ENCODE measurements at regions of chr5 and their contacts with region 1.

Region 1: DNA sequence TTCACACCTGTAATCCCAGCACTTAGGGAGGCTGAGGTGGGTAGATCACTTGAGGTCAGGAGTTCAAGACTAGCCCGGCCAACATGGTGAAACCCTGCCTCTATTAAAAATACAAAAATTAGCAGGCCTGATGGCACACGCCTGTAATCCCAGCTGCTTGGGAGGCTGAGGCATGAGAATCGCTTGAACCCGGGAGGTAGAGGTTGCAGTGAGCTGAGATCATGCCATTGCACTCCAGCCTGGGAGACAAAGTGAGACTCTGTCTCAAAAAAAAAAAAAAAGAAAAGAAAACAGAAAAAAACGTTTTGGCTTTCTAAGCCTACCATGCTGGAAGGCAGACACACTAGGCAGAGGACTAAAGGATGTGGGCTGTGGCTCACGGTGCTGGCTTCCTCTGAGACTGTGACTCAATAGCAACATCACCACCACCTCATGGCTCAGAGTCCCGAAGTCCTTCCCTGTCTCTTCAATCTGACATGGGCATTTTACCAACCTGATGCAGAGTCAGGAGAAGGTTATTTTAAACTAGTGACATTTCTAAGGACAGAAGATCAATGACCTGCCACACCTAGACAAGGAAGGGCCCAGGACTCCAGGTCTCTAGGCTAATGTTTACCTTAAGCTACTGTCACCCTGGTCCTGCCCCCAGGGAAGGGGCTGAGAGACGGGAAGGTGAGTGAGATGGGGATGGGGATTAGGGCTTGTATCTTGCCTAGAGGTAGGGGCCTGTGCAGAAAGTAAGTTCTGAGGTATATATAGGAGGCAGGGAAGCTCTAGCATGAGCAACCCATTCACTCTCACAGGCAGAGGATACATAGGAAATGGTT is 3.8 kb downstream of the ECSCR start:
- DNase-seq: peak; percentile 94
- ATAC-seq: peak; percentile 91
- H3K4me3 Mint-ChIP-seq: peak overlapping the region; percentile 43
- H3K27ac Mint-ChIP-seq: peak overlapping the region; percentile 88
- H3K4me1 Mint-ChIP-seq: peaks cover 43% of the 10 kb centered on the region
- H3K27me3 Mint-ChIP-seq: no peaks in the 10 kb centered on the region
- CTCF ChIP-seq: no peak

Region 2: GRCh38 chr5:139232147-139232724 is 226.6 kb before region 1 on chr5:
- CTCF ChIA-PET with region 1: no interaction called
- POLR2A ChIA-PET with region 1: no interaction called
- intact Hi-C with region 1: no loop called
- DNase-seq: no peak
- ATAC-seq: peak; percentile 13
- H3K4me3 Mint-ChIP-seq: no peak overlapping the region
- H3K27ac Mint-ChIP-seq: no peak overlapping the region
- H3K4me1 Mint-ChIP-seq: no peaks in the 10 kb centered on the region
- H3K27me3 Mint-ChIP-seq: no peaks in the 10 kb centered on the region
- CTCF ChIP-seq: no peak

Region 3: GRCh38 chr5:139439013-139439903 is 19.5 kb before region 1 on chr5 and contains the start of gene DNAJC18:
- CTCF ChIA-PET with region 1: interaction called, 3 read pairs
- POLR2A ChIA-PET with region 1: interaction called, 26 read pairs
- intact Hi-C with region 1: no loop called
- DNase-seq: peak; percentile 98
- ATAC-seq: peak; percentile 91
- H3K4me3 Mint-ChIP-seq: peak within 1 kb of the TSS; percentile 91
- H3K27ac Mint-ChIP-seq: peak within 1 kb of the TSS; percentile 96
- H3K4me1 Mint-ChIP-seq: peaks cover 42% of the 10 kb centered on the region
- H3K27me3 Mint-ChIP-seq: no peaks in the 10 kb centered on the region
- CTCF ChIP-seq: no peak
- total RNA-seq, gene DNAJC18: 24.9 to 27.5 TPM

Region 4: GRCh38 chr5:139446956-139447779 is 11.6 kb before region 1 on chr5:
- CTCF ChIA-PET with region 1: interaction called, 4 read pairs
- POLR2A ChIA-PET with region 1: interaction called, 26 read pairs
- intact Hi-C with region 1: no loop called
- DNase-seq: peak; percentile 58
- ATAC-seq: peak; percentile 72
- H3K4me3 Mint-ChIP-seq: no peak overlapping the region
- H3K27ac Mint-ChIP-seq: peak overlapping the region; percentile 85
- H3K4me1 Mint-ChIP-seq: peaks cover 48% of the 10 kb centered on the region
- H3K27me3 Mint-ChIP-seq: no peaks in the 10 kb centered on the region
- CTCF ChIP-seq: no peak

Region 5: GRCh38 chr5:139482050-139482889 is 23.5 kb after region 1 on chr5 and contains the start of gene STING1:
- CTCF ChIA-PET with region 1: no interaction called
- POLR2A ChIA-PET with region 1: interaction called, 16 read pairs
- intact Hi-C with region 1: no loop called
- DNase-seq: peak; percentile 77
- ATAC-seq: peak; percentile 80
- H3K4me3 Mint-ChIP-seq: peak within 1 kb of the TSS; percentile 80
- H3K27ac Mint-ChIP-seq: peak within 1 kb of the TSS; percentile 91
- H3K4me1 Mint-ChIP-seq: peaks cover 34% of the 10 kb centered on the region
- H3K27me3 Mint-ChIP-seq: no peaks in the 10 kb centered on the region
- CTCF ChIP-seq: no peak
- total RNA-seq, gene STING1: 43.7 to 46.3 TPM

Region 6: DNA sequence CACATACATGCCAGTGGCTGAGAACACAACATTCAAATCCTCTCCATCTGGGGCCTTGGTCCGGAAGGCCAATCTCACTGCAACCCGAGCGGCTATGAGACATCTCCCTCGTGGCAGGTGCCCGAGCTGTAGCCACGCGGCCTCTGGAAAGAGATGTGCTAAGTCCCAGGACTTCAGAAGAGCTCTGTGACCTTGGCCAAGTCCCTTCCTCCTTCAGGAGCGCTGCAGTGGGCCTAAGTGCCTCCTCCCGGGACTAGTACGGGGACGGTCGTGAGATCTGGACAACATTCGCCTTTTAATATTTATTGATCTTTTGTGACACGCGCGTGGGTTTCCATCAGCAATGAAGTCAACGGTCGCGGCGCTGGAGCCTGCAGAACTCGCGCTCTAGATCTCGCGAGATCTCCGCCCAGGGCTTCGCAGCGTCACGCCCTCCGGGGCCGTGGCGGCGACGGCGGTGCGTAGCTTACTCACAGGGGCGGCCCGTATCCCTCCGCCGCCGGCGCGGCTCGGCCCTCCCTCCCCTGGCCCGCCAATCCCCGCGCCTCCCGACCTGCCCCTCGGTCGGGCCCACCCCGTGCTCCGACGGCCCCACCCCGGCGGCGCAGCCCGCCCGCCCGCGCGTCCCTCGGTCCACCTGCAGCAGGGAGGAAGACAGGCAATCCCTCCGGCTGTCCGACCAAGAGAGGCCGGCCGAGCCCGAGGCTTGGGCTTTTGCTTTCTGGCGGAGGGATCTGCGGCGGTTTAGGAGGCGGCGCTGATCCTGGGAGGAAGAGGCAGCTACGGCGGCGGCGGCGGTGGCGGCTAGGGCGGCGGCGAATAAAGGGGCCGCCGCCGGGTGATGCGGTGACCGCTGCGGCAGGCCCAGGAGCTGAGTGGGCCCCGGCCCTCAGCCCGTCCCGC is 102.2 kb after region 1 on chr5 and contains the start of gene UBE2D2:
- CTCF ChIA-PET with region 1: no interaction called
- POLR2A ChIA-PET with region 1: no interaction called
- intact Hi-C with region 1: loop called (anchors 5 kb)
- DNase-seq: peak; percentile 98
- ATAC-seq: peak; percentile 91
- H3K4me3 Mint-ChIP-seq: peak within 1 kb of the TSS; percentile 87
- H3K27ac Mint-ChIP-seq: peak within 1 kb of the TSS; percentile 92
- H3K4me1 Mint-ChIP-seq: peaks cover 19% of the 10 kb centered on the region
- H3K27me3 Mint-ChIP-seq: no peaks in the 10 kb centered on the region
- CTCF ChIP-seq: no peak
- total RNA-seq, gene UBE2D2: 239 to 253 TPM

Region 7: GRCh38 chr5:139574641-139575312 is 116.0 kb after region 1 on chr5:
- CTCF ChIA-PET with region 1: no interaction called
- POLR2A ChIA-PET with region 1: no interaction called
- intact Hi-C with region 1: no loop called
- DNase-seq: peak; percentile 25
- ATAC-seq: peak; percentile 46
- H3K4me3 Mint-ChIP-seq: no peak overlapping the region
- H3K27ac Mint-ChIP-seq: peak overlapping the region; percentile 25
- H3K4me1 Mint-ChIP-seq: peaks cover 70% of the 10 kb centered on the region
- H3K27me3 Mint-ChIP-seq: no peaks in the 10 kb centered on the region
- CTCF ChIP-seq: peak; percentile 78